ENCODE measurements at regions of chr17 and their contacts with region 1.

Region 1: GRCh38 chr17:75205037-75205792 is at the start of gene NUP85:
- DNase-seq: peak; percentile 94
- ATAC-seq: peak; percentile 95
- H3K4me3 Mint-ChIP-seq: peak within 1 kb of the TSS; percentile 95
- H3K27ac Mint-ChIP-seq: peak within 1 kb of the TSS; percentile 100
- H3K4me1 Mint-ChIP-seq: peaks cover 22% of the 10 kb centered on the region
- H3K27me3 Mint-ChIP-seq: no peaks in the 10 kb centered on the region
- CTCF ChIP-seq: no peak
- total RNA-seq, gene NUP85: 108 to 116 TPM

Region 2: DNA sequence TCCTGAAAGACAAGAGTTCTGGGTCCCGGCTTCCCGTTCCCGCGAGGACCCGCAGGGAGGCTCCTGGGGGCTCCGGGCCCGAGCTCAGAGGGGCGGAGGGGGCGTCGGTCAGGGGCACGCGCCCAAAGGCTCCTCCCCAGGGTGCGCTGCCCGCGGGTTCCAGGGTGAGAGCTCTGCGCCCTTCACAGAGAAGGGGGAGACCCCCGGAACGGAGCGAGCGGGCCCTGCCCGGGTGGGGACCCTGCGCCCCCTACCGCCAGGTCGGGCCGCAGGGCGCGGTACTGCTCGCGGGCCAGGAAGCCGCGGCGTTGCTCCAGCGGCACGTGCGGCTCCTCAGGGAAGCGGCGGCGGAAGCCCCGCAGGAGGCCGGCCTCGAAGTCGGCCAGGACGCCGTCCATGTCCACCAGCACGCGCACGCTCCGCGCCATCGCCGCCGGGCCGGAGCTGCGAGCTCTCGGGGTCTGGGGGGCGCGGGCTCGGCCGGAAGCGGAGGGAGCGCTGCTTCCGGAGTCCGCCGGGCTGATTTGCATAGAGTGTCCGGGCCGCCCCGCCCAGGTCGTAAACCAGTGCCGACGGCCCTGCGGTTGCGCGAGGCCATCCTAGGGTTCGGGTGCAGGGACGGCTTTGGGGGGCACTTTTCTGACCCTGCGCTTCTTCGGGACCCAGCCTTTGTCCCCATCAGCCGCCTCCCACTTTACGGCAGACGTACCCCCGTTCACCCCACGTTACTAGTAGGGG is 73.8 kb before region 1 on chr17 and contains the start of gene NT5C:
- CTCF ChIA-PET with region 1: interaction called, 15 read pairs
- POLR2A ChIA-PET with region 1: interaction called, 4 read pairs
- intact Hi-C with region 1: no loop called
- DNase-seq: peak; percentile 86
- ATAC-seq: peak; percentile 83
- H3K4me3 Mint-ChIP-seq: peak within 1 kb of the TSS; percentile 86
- H3K27ac Mint-ChIP-seq: peak within 1 kb of the TSS; percentile 93
- H3K4me1 Mint-ChIP-seq: peaks cover 12% of the 10 kb centered on the region
- H3K27me3 Mint-ChIP-seq: no peaks in the 10 kb centered on the region
- CTCF ChIP-seq: peak; percentile 51
- total RNA-seq, gene NT5C: 66.1 to 68.1 TPM

Region 3: GRCh38 chr17:75173526-75173925 is 31.7 kb before region 1 on chr17:
- CTCF ChIA-PET with region 1: interaction called, 59 read pairs
- POLR2A ChIA-PET with region 1: interaction called, 5 read pairs
- intact Hi-C with region 1: no loop called
- DNase-seq: no peak
- ATAC-seq: no peak
- H3K4me3 Mint-ChIP-seq: no peak overlapping the region
- H3K27ac Mint-ChIP-seq: peak overlapping the region; percentile 28
- H3K4me1 Mint-ChIP-seq: peaks cover 27% of the 10 kb centered on the region
- H3K27me3 Mint-ChIP-seq: no peaks in the 10 kb centered on the region
- CTCF ChIP-seq: no peak

Region 4: DNA sequence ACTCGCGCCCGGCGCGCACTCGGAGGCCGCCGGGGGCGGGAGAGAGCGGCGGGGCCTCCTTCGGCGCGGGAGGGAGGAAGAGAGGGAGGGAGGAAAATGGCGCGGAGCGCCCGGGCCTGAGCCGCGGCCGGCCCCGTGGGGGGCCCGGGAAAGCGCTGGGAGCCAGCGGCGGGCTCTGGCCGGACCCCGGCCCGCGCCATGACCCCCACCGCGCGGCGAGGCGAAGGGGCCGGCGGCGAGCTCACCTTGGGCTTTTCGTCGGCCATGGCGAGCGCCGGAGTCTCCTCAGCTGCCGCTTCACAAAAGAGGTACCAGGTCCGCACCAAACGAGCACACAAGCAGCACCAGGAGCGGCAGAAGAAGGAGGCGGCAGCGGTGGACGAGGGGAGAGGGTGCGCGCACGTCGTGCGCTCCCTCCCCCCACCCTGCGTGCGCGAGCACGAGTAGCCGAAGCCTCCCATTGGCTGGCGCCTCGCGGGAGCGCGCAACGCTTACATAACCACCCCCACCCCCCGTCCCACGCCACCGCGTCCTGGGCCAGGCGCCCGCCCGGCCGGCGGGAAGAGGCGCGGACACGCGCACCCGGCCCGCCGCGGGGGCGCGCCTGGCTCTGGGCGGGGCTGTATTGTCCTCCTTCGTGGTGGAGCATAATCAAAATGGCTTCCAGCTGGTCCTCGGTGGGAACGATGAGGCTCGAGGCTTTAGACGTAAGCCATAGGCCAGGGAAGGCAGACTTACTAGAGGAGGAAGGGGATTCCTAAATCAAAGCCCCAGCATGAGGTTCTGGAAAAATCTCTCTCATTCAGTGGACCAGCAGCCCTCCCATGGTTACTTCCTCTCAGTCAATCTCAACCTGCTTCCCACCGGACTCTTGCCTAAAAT is 22.4 kb before region 1 on chr17 and contains the start of gene SUMO2:
- CTCF ChIA-PET with region 1: interaction called, 79 read pairs
- POLR2A ChIA-PET with region 1: interaction called, 5 read pairs
- intact Hi-C with region 1: no loop called
- DNase-seq: peak; percentile 96
- ATAC-seq: peak; percentile 82
- H3K4me3 Mint-ChIP-seq: peak within 1 kb of the TSS; percentile 90
- H3K27ac Mint-ChIP-seq: peak within 1 kb of the TSS; percentile 97
- H3K4me1 Mint-ChIP-seq: peaks cover 39% of the 10 kb centered on the region
- H3K27me3 Mint-ChIP-seq: no peaks in the 10 kb centered on the region
- CTCF ChIP-seq: no peak
- total RNA-seq, gene SUMO2: 506 to 525 TPM